PC-9 (cell line): ENCODE measurements at regions of chr2 and their contacts with region 1.

Region 1: DNA sequence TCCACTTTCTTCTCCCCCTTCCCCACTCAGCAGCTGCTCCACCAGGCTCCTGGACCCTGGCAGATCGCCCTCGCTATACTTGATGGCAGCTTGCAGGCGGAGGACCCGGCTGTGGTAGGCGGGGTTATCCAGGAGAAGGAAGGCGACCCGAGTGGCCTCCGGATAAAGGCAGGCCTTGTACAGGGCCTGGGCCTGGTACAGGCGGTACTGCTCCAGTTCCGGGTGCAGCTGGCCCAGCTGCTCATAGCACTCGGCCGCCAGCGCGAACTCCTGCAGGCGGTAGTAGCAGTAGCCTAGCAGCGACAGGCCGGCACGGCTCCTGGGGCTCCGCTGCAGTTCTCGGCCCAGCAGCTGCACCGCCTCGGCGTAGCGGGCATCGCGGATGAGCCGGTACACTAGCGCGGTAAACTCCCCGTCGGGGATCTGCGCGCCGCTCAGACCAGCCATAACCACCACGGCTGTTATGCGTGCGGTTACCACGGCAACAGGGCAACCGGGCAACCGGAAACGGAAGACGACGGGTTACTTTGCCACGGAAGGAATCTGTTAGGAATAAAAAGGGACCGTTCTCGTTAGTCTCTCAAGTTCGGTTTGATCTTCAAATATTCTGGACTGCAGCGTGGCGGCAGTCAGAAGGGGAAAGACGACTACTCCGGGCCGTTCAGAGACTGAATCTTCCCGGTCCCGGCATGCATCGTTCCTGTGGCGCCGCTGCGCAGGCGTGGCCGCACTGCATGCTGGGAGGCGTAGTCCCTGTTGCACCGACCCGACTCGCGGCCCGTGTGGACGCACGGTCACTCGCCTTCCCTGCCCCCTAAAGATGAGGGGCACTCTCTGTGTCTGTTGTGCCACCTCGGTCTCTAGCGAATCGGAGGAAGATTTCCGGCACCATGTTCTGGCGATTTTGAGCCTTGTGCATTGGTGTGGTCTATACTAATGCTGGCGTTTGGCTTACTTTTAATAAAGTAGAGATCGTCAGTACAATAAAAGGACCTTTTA is 226.0 kb downstream of the AGPS start:
- DNase-seq: peak; percentile 74 to 93
- H3K4me3 ChIP-seq: peak overlapping the region; percentile 64
- H3K27ac ChIP-seq: peak overlapping the region; percentile 48
- H3K4me1 ChIP-seq: 0 out of 2 replicates have a peak, but pooled peaks cover 6% of the 10 kb centered on the region
- H3K27me3 ChIP-seq: no peaks in the 10 kb centered on the region
- CTCF ChIP-seq: 0 out of 2 replicates have a peak, but pooled peaks have one; percentile 26

Region 2: DNA sequence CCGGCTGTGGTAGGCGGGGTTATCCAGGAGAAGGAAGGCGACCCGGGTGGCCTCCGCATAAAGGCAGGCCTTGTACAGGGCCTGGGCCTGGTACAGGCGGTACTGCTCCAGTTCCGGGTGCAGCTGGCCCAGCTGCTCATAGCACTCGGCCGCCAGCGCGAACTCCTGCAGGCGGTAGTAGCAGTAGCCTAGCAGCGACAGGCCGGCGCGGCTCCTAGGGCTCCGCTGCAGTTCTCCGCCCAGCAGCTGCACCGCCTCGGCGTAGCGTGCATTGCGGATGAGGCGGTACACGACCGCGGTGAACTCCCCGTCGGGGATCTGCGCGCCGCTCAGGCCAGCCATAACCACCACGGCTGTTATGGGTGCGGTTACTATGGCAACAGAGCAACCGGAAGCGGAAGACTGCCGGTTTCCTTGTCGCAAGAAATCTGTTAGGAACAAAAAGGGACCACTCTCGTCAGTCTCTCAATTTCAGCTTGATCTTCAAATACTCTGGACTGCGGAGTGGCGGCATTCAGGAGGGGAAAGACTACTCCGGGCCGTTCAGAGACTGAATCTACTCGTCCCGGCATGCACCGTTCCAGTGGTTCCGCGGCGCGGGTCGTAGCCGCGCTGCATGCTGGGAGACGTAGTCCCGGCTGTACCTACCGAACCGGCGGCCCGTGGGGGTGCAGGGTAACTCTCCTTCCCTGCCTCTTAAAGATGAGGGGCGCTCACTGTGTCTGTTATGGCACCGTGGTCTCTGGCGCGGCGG is 66.0 kb before region 1 on chr2:
- CTCF ChIA-PET with region 1: no interaction called
- POLR2A ChIA-PET with region 1: no interaction called
- intact Hi-C with region 1: loop called (anchors 2 kb)
- DNase-seq: peak; percentile 85 to 93
- H3K4me3 ChIP-seq: peak overlapping the region; percentile 79
- H3K27ac ChIP-seq: peak overlapping the region; percentile 61
- H3K4me1 ChIP-seq: peaks cover 4% of the 10 kb centered on the region; the same call in 1 of the 2 replicates
- H3K27me3 ChIP-seq: no peaks in the 10 kb centered on the region
- CTCF ChIP-seq: no peak